Colonic mucosa (tissue), 4 donors: ENCODE measurements at regions of chr2 and their contacts with region 1.

Region 1: DNA sequence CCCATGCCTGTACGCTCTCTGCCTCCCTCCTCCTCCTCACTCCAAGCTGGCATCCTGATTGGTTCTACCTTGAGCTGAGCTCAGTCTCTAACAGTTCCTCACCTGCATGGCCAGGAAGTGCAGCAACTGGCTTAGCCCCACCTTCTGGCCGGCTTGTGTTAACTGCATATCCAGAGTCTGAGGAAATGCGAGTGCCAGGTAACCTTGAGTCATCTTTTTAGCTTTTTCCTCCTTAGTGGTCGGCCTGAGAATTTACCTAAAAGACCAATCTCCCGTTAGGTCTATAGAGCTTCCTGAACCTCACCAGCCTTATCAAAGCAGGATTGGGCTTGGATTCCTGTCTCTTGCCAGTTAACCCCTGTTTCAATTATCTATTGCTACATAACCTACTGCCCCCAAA is 89.5 kb upstream of the STK39 start:
- DNase-seq: peak; percentile 77
- H3K4me3 ChIP-seq: no peak overlapping the region
- H3K27ac ChIP-seq: no peak overlapping the region
- H3K4me1 ChIP-seq: no peaks in the 10 kb centered on the region
- H3K27me3 ChIP-seq: no peaks in the 10 kb centered on the region
- CTCF ChIP-seq: peak; percentile 51

Region 2: GRCh38 chr2:168256448-168256847 is 80.4 kb before region 1 on chr2:
- intact Hi-C with region 1: loop called (anchors 5 kb)
- DNase-seq: peak; percentile 71
- H3K4me3 ChIP-seq: no peak overlapping the region
- H3K27ac ChIP-seq: no peak overlapping the region
- H3K4me1 ChIP-seq: no peaks in the 10 kb centered on the region
- H3K27me3 ChIP-seq: no peaks in the 10 kb centered on the region
- CTCF ChIP-seq: no peak